PC-3 (cell line): ENCODE measurements at regions of chr17 and their contacts with region 1.

Region 1: DNA sequence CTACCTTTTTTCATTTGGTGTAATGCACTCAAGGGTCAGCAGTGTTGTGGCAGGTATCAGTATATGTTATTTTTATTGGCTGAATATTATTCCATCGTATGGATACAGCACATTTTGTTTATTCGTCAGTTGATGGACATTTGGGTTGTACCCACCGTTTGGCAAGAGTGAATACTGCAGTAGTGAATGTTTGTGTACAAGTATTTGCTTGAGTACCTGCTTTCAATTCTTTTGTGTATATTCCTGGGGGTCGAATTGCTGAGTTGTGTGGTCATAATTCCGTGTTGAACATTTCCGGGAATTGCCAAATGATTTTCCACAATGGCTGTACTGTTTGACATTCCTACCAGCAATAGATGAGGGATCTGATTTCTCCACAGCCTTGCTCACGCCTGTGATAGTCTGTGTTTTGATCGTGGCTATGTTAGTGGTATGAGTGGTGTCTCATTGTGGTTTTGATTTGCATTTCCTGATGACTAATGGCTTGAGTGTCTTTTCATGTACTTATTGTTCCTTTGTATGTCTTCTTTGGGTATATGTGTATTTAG is 108.4 kb downstream of the OR1D5 start:
- DNase-seq: peak; percentile 94
- ATAC-seq: peak; percentile 87
- H3K4me3 ChIP-seq: peak overlapping the region; percentile 49; the same call in 1 of the 2 replicates
- H3K27ac ChIP-seq: peak overlapping the region; percentile 92
- H3K4me1 ChIP-seq: peaks cover 64% of the 10 kb centered on the region
- H3K27me3 ChIP-seq: no peaks in the 10 kb centered on the region
- CTCF ChIP-seq: no peak

Region 2: GRCh38 chr17:2892305-2892971 is 62.5 kb before region 1 on chr17:
- CTCF ChIA-PET with region 1: no interaction called
- POLR2A ChIA-PET with region 1: interaction called, 4 read pairs
- intact Hi-C with region 1: loop called (anchors 5 kb)
- DNase-seq: peak; percentile 92
- ATAC-seq: peak; percentile 93
- H3K4me3 ChIP-seq: no peak overlapping the region
- H3K27ac ChIP-seq: peak overlapping the region; percentile 92
- H3K4me1 ChIP-seq: peaks cover 39% of the 10 kb centered on the region
- H3K27me3 ChIP-seq: no peaks in the 10 kb centered on the region
- CTCF ChIP-seq: no peak

Region 3: GRCh38 chr17:2937331-2938003 is 17.5 kb before region 1 on chr17:
- CTCF ChIA-PET with region 1: no interaction called
- POLR2A ChIA-PET with region 1: no interaction called
- intact Hi-C with region 1: no loop called
- DNase-seq: no peak
- ATAC-seq: peak; percentile 48; the same call in 1 of the 2 replicates
- H3K4me3 ChIP-seq: no peak overlapping the region
- H3K27ac ChIP-seq: no peak overlapping the region
- H3K4me1 ChIP-seq: 0 out of 2 replicates have a peak, but pooled peaks cover 4% of the 10 kb centered on the region
- H3K27me3 ChIP-seq: no peaks in the 10 kb centered on the region
- CTCF ChIP-seq: peak; percentile 32

Region 4: DNA sequence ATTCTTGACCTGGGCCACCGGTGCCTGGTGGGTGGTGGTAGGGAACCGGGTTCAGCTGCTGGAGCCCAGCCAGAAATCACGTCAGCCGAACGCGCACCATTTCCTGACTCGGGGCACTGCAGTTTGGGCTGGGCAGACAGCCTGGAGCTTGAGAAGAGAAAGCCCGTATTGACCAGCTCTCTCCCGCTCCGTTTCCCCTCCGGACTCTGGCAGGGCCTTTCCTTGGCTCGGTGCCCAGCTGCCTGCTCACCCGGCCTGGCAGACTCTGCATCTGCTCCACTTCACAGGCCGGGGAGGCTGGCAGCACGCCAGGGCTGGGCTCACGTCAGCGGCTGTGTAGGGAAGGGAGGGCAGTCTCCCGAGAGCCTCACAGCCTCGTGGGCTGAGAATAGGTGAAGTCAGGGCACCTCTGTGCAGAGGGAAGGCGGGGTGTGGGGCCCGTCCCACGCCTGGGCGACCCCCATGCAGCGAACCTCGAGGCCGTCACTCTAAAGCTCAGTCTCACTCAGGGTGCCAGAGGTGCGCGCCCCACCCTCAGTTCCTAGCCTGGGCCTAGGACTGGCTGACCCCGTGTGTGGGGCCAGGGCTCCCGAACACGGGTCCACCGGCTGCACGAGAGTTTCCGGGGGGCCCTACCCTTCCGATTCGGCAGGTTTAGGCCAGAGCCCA is 49.3 kb after region 1 on chr17:
- CTCF ChIA-PET with region 1: no interaction called
- POLR2A ChIA-PET with region 1: no interaction called
- intact Hi-C with region 1: loop called (anchors 2 kb)
- DNase-seq: peak; percentile 97
- ATAC-seq: peak; percentile 95
- H3K4me3 ChIP-seq: peak overlapping the region; percentile 23; the same call in 1 of the 2 replicates
- H3K27ac ChIP-seq: peak overlapping the region; percentile 89
- H3K4me1 ChIP-seq: peaks cover 23% of the 10 kb centered on the region
- H3K27me3 ChIP-seq: no peaks in the 10 kb centered on the region
- CTCF ChIP-seq: no peak